ENCODE measurements at regions of chr7 and their contacts with region 1.

Region 1: GRCh38 chr7:116211006-116211912 is 920 bp downstream of the TES start:
- DNase-seq: peak; percentile 80 to 93 (median 85)
- H3K4me3 ChIP-seq: peak overlapping the region; percentile 62 to 82
- H3K4me3 Mint-ChIP-seq: peak overlapping the region; percentile 93 to 98 (median 98)
- H3K27ac ChIP-seq: peak overlapping the region; percentile 92
- H3K27ac Mint-ChIP-seq: peak overlapping the region; percentile 96 to 99 (median 98)
- H3K4me1 ChIP-seq: peaks cover 56% of the 10 kb centered on the region
- H3K4me1 Mint-ChIP-seq: peaks cover 49 to 62% (median 56%) of the 10 kb centered on the region in 4 donors
- H3K27me3 ChIP-seq: no peaks in the 10 kb centered on the region
- H3K27me3 Mint-ChIP-seq: no peaks in the 10 kb centered on the region

Region 2: DNA sequence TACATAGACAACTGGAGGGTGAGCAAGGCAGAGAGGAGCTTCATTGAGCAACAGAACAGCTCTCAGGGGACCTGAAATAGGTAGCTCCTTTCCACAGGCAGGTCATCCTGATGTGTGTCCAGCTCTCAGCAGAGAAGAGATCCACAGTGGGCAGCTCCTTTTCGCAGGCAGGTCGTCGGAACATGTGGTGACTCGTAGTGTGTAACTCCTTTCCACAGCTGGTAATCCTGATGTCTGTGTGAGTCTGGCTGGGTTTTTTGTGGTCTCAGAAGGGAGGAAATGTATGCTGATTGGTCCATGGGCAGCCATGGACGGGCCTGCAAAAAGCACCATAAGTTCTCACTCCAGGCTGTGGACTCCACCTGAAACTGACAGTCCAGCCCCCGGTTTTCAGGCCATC is 25.3 kb before region 1 on chr7:
- CTCF ChIA-PET with region 1: interaction called, 55 read pairs
- POLR2A ChIA-PET with region 1: interaction called, 39 read pairs
- intact Hi-C with region 1: no loop called
- DNase-seq: no peak
- H3K4me3 ChIP-seq: no peak overlapping the region
- H3K4me3 Mint-ChIP-seq: no peak overlapping the region
- H3K27ac ChIP-seq: no peak overlapping the region
- H3K27ac Mint-ChIP-seq: no peak overlapping the region
- H3K4me1 ChIP-seq: no peaks in the 10 kb centered on the region
- H3K4me1 Mint-ChIP-seq: peaks cover 0 to under 1% (median under 1%) of the 10 kb centered on the region in 4 donors
- H3K27me3 ChIP-seq: no peaks in the 10 kb centered on the region
- H3K27me3 Mint-ChIP-seq: peaks cover 0 to 4% of the 10 kb centered on the region in 2 donors

Region 3: DNA sequence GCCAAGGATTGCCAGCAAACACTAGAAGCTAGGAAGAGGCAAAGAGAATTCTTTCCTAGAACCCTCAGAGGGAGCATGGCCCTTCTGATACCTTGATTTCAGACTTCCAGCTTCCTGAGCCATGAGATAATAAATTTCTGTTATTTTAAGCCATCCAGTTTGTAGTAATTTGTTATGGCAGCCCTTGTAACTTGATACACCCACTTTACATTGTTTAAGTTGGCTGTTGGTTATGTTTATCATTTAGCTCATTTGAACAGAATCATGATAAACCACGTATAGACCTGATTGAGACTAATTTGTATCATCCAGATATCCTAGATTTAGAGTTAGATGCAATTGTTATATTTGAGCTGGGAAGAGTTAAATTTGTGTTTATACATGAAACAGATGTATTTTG is 10.3 kb before region 1 on chr7:
- CTCF ChIA-PET with region 1: interaction called, 12 read pairs
- POLR2A ChIA-PET with region 1: interaction called, 49 read pairs
- intact Hi-C with region 1: no loop called
- DNase-seq: no peak
- H3K4me3 ChIP-seq: no peak overlapping the region
- H3K4me3 Mint-ChIP-seq: no peak overlapping the region
- H3K27ac ChIP-seq: no peak overlapping the region
- H3K27ac Mint-ChIP-seq: no peak overlapping the region
- H3K4me1 ChIP-seq: no peaks in the 10 kb centered on the region
- H3K4me1 Mint-ChIP-seq: no peaks in the 10 kb centered on the region
- H3K27me3 ChIP-seq: no peaks in the 10 kb centered on the region
- H3K27me3 Mint-ChIP-seq: no peaks in the 10 kb centered on the region

Region 4: DNA sequence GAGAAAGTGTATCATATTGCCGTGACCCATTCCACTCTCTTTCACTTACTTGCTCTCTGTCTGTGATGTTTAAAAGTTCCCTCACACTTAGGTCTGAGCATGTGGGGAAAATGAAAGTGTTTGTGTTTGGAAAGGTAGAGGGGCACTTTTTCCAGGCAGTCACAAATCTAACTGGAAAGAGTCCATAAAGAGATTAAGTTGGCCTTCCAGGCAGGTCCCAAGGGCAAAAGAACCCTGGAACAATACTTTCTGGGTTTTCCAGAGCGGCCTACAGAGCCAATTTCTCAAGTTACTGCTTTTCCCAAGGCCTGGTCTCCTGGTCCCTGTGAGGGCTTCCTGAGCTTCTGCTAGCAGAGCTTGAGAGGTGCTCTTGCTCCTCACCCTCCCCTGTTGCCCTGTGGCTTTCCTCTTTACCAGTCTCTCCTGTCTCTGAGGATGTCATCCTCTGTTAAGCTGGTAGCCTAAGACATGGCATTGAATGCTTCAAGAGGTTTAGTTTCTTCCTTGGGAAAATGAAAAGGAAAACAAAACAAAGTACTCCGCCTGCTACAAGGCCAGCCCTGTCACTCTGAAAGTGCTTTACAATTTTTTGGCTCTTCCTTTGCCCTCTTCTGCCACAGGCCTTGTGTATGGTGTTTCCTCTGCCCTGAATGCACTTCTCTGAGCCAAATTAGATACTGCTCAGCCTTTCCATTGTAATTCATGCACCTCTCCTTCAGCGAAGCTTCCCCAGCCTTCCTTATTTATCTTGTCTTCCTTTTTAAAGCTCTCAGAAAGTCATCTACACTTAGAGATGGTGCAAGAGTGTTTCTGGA is 19.1 kb after region 1 on chr7:
- CTCF ChIA-PET with region 1: interaction called, 118 read pairs
- POLR2A ChIA-PET with region 1: interaction called, 96 read pairs
- intact Hi-C with region 1: loop called (anchors 1 kb)
- DNase-seq: no peak
- H3K4me3 ChIP-seq: no peak overlapping the region
- H3K4me3 Mint-ChIP-seq: peak overlapping the region in 7 of 8 donors; percentile 5 to 74 (median 52)
- H3K27ac ChIP-seq: no peak overlapping the region
- H3K27ac Mint-ChIP-seq: peak overlapping the region; percentile 43 to 90 (median 79)
- H3K4me1 ChIP-seq: peaks cover 92% of the 10 kb centered on the region
- H3K4me1 Mint-ChIP-seq: peaks cover 69 to 93% (median 75%) of the 10 kb centered on the region in 4 donors
- H3K27me3 ChIP-seq: no peaks in the 10 kb centered on the region
- H3K27me3 Mint-ChIP-seq: no peaks in the 10 kb centered on the region

Region 5: GRCh38 chr7:116426428-116427156 is 215.3 kb after region 1 on chr7:
- CTCF ChIA-PET with region 1: no interaction called
- POLR2A ChIA-PET with region 1: no interaction called
- intact Hi-C with region 1: no loop called
- DNase-seq: no peak
- H3K4me3 ChIP-seq: no peak overlapping the region
- H3K4me3 Mint-ChIP-seq: no peak overlapping the region
- H3K27ac ChIP-seq: no peak overlapping the region
- H3K27ac Mint-ChIP-seq: no peak overlapping the region
- H3K4me1 ChIP-seq: no peaks in the 10 kb centered on the region
- H3K4me1 Mint-ChIP-seq: no peaks in the 10 kb centered on the region
- H3K27me3 ChIP-seq: no peaks in the 10 kb centered on the region
- H3K27me3 Mint-ChIP-seq: peaks cover 1 to 5% of the 10 kb centered on the region in 2 donors

Region 6: GRCh38 chr7:116953727-116954442 is 742.6 kb after region 1 on chr7:
- CTCF ChIA-PET with region 1: no interaction called
- POLR2A ChIA-PET with region 1: interaction called, 3 read pairs
- intact Hi-C with region 1: loop called (anchors 5 kb)
- DNase-seq: peak in 3 of 5 donors; percentile 44 to 72 (median 68)
- H3K4me3 ChIP-seq: peak overlapping the region; percentile 70 to 80
- H3K4me3 Mint-ChIP-seq: peak overlapping the region; percentile 94 to 98 (median 96)
- H3K27ac ChIP-seq: peak overlapping the region; percentile 62
- H3K27ac Mint-ChIP-seq: peak overlapping the region; percentile 86 to 97 (median 94)
- H3K4me1 ChIP-seq: peaks cover 26% of the 10 kb centered on the region
- H3K4me1 Mint-ChIP-seq: peaks cover 15 to 32% (median 24%) of the 10 kb centered on the region in 4 donors
- H3K27me3 ChIP-seq: no peaks in the 10 kb centered on the region
- H3K27me3 Mint-ChIP-seq: no peaks in the 10 kb centered on the region

Measured in CD4-positive, alpha-beta memory T cell (primary cell).